Prostate gland (tissue), 2 donors: ENCODE measurements at regions of chr19 and their contacts with region 1.

Region 1: GRCh38 chr19:39125554-39126311 is at the start of gene PAK4:
- DNase-seq: peak; percentile 97
- H3K4me3 ChIP-seq: peak within 1 kb of the TSS; percentile 60 to 85
- H3K27ac ChIP-seq: peak within 1 kb of the TSS; percentile 82 to 93
- H3K4me1 ChIP-seq: peaks cover 34% of the 10 kb centered on the region
- H3K27me3 ChIP-seq: no peaks in the 10 kb centered on the region
- CTCF ChIP-seq: peak in 1 of 4 experiments; percentile 14
- POLR2A ChIP-seq: peak; percentile 85
- total RNA-seq, gene PAK4: 111 to 123 TPM

Region 2: GRCh38 chr19:38964738-38965137 is 161.0 kb before region 1 on chr19:
- intact Hi-C with region 1: loop called (anchors 10 kb)
- DNase-seq: no peak
- H3K4me3 ChIP-seq: no peak overlapping the region
- H3K27ac ChIP-seq: no peak overlapping the region
- H3K4me1 ChIP-seq: no peaks in the 10 kb centered on the region
- H3K27me3 ChIP-seq: no peaks in the 10 kb centered on the region
- CTCF ChIP-seq: no peak
- POLR2A ChIP-seq: no peak

Region 3: GRCh38 chr19:39187559-39187957 is 61.8 kb after region 1 on chr19:
- intact Hi-C with region 1: loop called (anchors 5 kb)
- DNase-seq: no peak
- H3K4me3 ChIP-seq: no peak overlapping the region
- H3K27ac ChIP-seq: no peak overlapping the region
- H3K4me1 ChIP-seq: no peaks in the 10 kb centered on the region
- H3K27me3 ChIP-seq: no peaks in the 10 kb centered on the region
- CTCF ChIP-seq: no peak
- POLR2A ChIP-seq: no peak

Region 4: GRCh38 chr19:39328046-39328705 is 202.4 kb after region 1 on chr19:
- intact Hi-C with region 1: loop called (anchors 5 kb)
- DNase-seq: peak; percentile 80
- H3K4me3 ChIP-seq: no peak overlapping the region
- H3K27ac ChIP-seq: no peak overlapping the region
- H3K4me1 ChIP-seq: no peaks in the 10 kb centered on the region
- H3K27me3 ChIP-seq: no peaks in the 10 kb centered on the region
- CTCF ChIP-seq: peak; percentile 89 to 97 (median 94)
- POLR2A ChIP-seq: no peak